ENCODE measurements at regions of chr11 and their contacts with region 1.

Region 1: DNA sequence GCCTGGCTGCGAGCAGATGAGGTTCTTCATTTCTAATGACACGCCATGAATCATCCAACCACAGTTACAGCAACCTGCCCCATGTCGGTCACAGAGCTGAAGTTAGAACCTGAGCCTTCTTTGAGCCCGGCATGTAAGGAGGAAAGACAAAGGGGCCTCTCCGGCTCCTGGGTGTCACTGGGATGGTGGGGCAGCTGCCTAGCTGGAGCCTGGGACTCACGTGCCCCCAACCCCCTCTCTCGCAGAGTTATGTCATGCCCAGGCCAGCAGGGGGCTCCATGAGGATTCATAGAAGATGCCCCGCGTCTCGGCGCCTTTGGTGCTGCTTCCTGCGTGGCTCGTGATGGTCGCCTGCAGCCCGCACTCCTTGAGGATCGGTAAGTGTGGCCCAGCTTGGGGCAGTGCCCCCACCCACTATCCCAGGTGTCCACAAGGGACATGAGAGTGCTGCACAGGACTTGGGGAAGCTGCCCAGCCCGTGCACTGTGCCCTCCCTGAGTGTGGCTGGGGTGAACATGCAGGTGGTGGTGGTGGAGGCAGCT is 148.5 kb downstream of the GRIK4 start:
- DNase-seq: peak in 1 of 2 experiments; percentile 87
- H3K4me3 ChIP-seq: no peak overlapping the region
- H3K27ac ChIP-seq: no peak overlapping the region
- H3K4me1 ChIP-seq: peaks cover 3 to 6% (median 4%) of the 10 kb centered on the region in 4 experiments; a peak in 5 of 7 replicates
- H3K27me3 ChIP-seq: no peaks in the 10 kb centered on the region; a peak in 2 of 7 replicates
- CTCF ChIP-seq: peak; percentile 79 to 83 (median 81)
- EP300 ChIP-seq: no peak
- POLR2A ChIP-seq: no peak
- RAD21 ChIP-seq: peak; percentile 65 to 76

Region 2: GRCh38 chr11:120632579-120632978 is 27.5 kb before region 1 on chr11:
- CTCF ChIA-PET with region 1: interaction called, 12 read pairs
- POLR2A ChIA-PET with region 1: no interaction called
- DNase-seq: no peak
- H3K4me3 ChIP-seq: no peak overlapping the region
- H3K27ac ChIP-seq: no peak overlapping the region
- H3K4me1 ChIP-seq: peaks cover 0 to 8% (median 2%) of the 10 kb centered on the region in 4 experiments; a peak in 2 of 7 replicates
- H3K27me3 ChIP-seq: peaks cover 0 to 5% (median 2%) of the 10 kb centered on the region in 4 experiments; a peak in 5 of 7 replicates
- CTCF ChIP-seq: peak; percentile 45 to 88 (median 64)
- EP300 ChIP-seq: no peak
- POLR2A ChIP-seq: no peak
- RAD21 ChIP-seq: peak; percentile 23 to 54; a peak in 2 of 4 replicates

Region 3: GRCh38 chr11:120674542-120674941 is 14.4 kb after region 1 on chr11:
- CTCF ChIA-PET with region 1: interaction called, 16 read pairs
- POLR2A ChIA-PET with region 1: no interaction called
- DNase-seq: no peak
- H3K4me3 ChIP-seq: no peak overlapping the region
- H3K27ac ChIP-seq: no peak overlapping the region
- H3K4me1 ChIP-seq: no peaks in the 10 kb centered on the region
- H3K27me3 ChIP-seq: no peaks in the 10 kb centered on the region
- CTCF ChIP-seq: no peak
- EP300 ChIP-seq: no peak
- POLR2A ChIP-seq: no peak
- RAD21 ChIP-seq: no peak

Region 4: GRCh38 chr11:120688163-120688562 is 28.1 kb after region 1 on chr11:
- CTCF ChIA-PET with region 1: interaction called, 26 read pairs
- POLR2A ChIA-PET with region 1: no interaction called
- DNase-seq: no peak
- H3K4me3 ChIP-seq: no peak overlapping the region
- H3K27ac ChIP-seq: no peak overlapping the region
- H3K4me1 ChIP-seq: no peaks in the 10 kb centered on the region
- H3K27me3 ChIP-seq: no peaks in the 10 kb centered on the region
- CTCF ChIP-seq: no peak
- EP300 ChIP-seq: no peak
- POLR2A ChIP-seq: no peak
- RAD21 ChIP-seq: no peak

Region 5: GRCh38 chr11:120727752-120728151 is 67.7 kb after region 1 on chr11:
- CTCF ChIA-PET with region 1: no interaction called
- POLR2A ChIA-PET with region 1: no interaction called
- DNase-seq: no peak
- H3K4me3 ChIP-seq: no peak overlapping the region
- H3K27ac ChIP-seq: no peak overlapping the region
- H3K4me1 ChIP-seq: peaks cover 0 to 5% (median 0%) of the 10 kb centered on the region in 4 experiments; a peak in 1 of 7 replicates
- H3K27me3 ChIP-seq: peaks cover 0 to 2% (median 0%) of the 10 kb centered on the region in 4 experiments; a peak in 1 of 7 replicates
- CTCF ChIP-seq: no peak
- EP300 ChIP-seq: no peak
- POLR2A ChIP-seq: no peak
- RAD21 ChIP-seq: no peak

Region 6: GRCh38 chr11:120952461-120953434 is 292.7 kb after region 1 on chr11:
- CTCF ChIA-PET with region 1: interaction called, 11 read pairs
- POLR2A ChIA-PET with region 1: no interaction called
- DNase-seq: peak; percentile 60 to 97
- H3K4me3 ChIP-seq: peak overlapping the region in 1 of 4 experiments; percentile 18; a peak in 1 of 8 replicates
- H3K27ac ChIP-seq: no peak overlapping the region
- H3K4me1 ChIP-seq: peaks cover 11 to 24% (median 15%) of the 10 kb centered on the region in 4 experiments
- H3K27me3 ChIP-seq: no peaks in the 10 kb centered on the region; a peak in 1 of 7 replicates
- CTCF ChIP-seq: peak; percentile 84 to 94 (median 93)
- EP300 ChIP-seq: 0 out of 3 replicates have a peak, but pooled peaks of 1 of the 2 experiments have one; percentile 27
- POLR2A ChIP-seq: no peak
- RAD21 ChIP-seq: peak; percentile 94 to 98

Measured in H1 (cell line).